CD14-positive monocyte (primary cell): ENCODE measurements at regions of chr16 and their contacts with region 1.

Region 1: DNA sequence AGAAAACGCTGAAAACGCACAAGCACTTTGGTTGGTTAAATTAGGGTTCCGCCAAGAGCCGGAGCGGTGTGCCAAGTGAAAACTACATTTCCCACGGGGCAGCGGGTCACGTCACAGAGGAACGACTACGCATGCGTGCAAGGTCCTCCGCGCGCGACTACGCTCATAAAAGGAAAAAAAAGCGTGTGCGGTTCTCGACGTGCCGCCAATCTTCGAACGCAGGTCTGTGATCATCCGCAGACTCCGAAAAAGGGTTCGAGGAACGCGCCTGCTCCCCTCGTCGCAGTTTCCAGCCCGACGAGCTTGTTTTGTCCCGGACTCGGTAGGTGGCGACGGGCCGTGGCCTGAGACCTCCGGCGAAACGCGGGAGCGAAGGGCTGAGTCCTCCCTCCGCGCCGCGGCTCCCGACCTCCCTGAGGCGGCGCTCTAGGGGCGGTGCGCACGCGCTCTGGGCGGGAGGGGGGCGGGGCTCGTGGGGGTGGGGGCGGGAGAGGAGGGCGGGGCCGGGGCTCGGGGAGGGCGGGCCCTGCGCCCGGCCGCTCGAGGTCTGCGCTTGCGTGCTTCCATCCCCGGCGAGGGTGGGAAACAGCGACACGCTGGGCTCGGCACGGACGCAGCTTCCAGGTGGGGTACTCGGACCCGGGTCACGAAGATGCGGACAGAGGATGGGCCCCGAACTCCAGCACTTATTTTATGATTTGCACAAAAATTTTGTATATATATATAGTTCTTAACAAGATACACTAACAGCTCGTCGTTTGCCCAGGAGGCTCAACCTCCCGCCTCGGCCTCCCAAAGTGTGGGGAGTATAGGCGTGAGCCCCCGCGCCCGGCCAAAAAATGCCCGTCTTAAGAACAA is at the start of gene SGF29:
- DNase-seq: peak; percentile 91 to 92 (median 92)
- H3K4me3 ChIP-seq: peak within 1 kb of the TSS; percentile 56 to 84 (median 71)
- H3K4me3 Mint-ChIP-seq: peak within 1 kb of the TSS; percentile 87 to 90
- H3K27ac ChIP-seq: peak within 1 kb of the TSS; percentile 95 to 99
- H3K27ac Mint-ChIP-seq: peak within 1 kb of the TSS; percentile 95 to 99 (median 98)
- H3K4me1 ChIP-seq: peaks cover 16 to 31% of the 10 kb centered on the region in 2 donors
- H3K4me1 Mint-ChIP-seq: peaks cover 28% of the 10 kb centered on the region
- H3K27me3 ChIP-seq: no peaks in the 10 kb centered on the region
- H3K27me3 Mint-ChIP-seq: peaks cover 0 to 1% (median 1%) of the 10 kb centered on the region in 3 donors
- CTCF ChIP-seq: peak; percentile 12
- polyA plus RNA-seq, gene SGF29: 14.0 to 24.3 (median 18.8) TPM

Region 2: DNA sequence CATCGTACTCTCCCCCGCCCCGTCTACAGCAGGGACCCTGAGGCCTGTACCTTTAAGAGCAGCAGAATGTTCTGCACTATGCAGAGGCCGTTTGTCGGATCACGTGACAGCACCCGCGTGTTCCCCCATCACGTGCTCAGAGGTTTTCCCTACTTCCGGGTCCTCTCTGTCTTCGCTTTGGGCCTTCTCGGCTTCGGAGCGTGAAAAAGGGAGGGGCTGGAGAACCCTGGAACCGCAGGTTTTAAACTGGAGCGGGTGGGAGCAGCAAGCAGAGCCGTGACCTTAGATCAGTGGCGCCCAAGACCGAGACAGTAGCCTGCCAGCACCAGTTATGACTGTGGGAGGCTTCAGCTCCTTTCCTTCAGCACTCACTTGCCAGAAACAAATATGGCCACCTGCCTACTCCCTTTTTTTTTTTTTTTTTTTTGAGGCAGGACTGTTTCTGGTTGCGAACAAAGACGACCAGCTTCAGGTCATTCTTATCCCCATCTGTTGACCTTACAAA is 62.0 kb before region 1 on chr16 and contains the start of gene CLN3:
- intact Hi-C with region 1: loop called (anchors 5 kb)
- DNase-seq: peak; percentile 89 to 93 (median 91)
- H3K4me3 ChIP-seq: peak within 1 kb of the TSS; percentile 73 to 100 (median 99)
- H3K4me3 Mint-ChIP-seq: peak within 1 kb of the TSS; percentile 88 to 95
- H3K27ac ChIP-seq: peak within 1 kb of the TSS; percentile 99
- H3K27ac Mint-ChIP-seq: peak within 1 kb of the TSS; percentile 99 to 100 (median 100)
- H3K4me1 ChIP-seq: peaks cover 53 to 62% of the 10 kb centered on the region in 2 donors
- H3K4me1 Mint-ChIP-seq: peaks cover 58% of the 10 kb centered on the region
- H3K27me3 ChIP-seq: no peaks in the 10 kb centered on the region
- H3K27me3 Mint-ChIP-seq: peaks cover 0 to 1% (median 0%) of the 10 kb centered on the region in 3 donors
- CTCF ChIP-seq: no peak
- polyA plus RNA-seq, gene CLN3: 37.0 to 113 (median 50.2) TPM

Region 3: GRCh38 chr16:28834349-28834748 is 280.3 kb after region 1 on chr16:
- intact Hi-C with region 1: no loop called
- DNase-seq: no peak
- H3K4me3 ChIP-seq: no peak overlapping the region
- H3K4me3 Mint-ChIP-seq: no peak overlapping the region
- H3K27ac ChIP-seq: no peak overlapping the region
- H3K27ac Mint-ChIP-seq: peak overlapping the region in 1 of 7 donors; percentile 18
- H3K4me1 ChIP-seq: peaks cover 3 to 12% of the 10 kb centered on the region in 2 donors
- H3K4me1 Mint-ChIP-seq: peaks cover 11% of the 10 kb centered on the region
- H3K27me3 ChIP-seq: no peaks in the 10 kb centered on the region
- H3K27me3 Mint-ChIP-seq: peaks cover 0 to 1% (median 0%) of the 10 kb centered on the region in 3 donors
- CTCF ChIP-seq: no peak

Region 4: DNA sequence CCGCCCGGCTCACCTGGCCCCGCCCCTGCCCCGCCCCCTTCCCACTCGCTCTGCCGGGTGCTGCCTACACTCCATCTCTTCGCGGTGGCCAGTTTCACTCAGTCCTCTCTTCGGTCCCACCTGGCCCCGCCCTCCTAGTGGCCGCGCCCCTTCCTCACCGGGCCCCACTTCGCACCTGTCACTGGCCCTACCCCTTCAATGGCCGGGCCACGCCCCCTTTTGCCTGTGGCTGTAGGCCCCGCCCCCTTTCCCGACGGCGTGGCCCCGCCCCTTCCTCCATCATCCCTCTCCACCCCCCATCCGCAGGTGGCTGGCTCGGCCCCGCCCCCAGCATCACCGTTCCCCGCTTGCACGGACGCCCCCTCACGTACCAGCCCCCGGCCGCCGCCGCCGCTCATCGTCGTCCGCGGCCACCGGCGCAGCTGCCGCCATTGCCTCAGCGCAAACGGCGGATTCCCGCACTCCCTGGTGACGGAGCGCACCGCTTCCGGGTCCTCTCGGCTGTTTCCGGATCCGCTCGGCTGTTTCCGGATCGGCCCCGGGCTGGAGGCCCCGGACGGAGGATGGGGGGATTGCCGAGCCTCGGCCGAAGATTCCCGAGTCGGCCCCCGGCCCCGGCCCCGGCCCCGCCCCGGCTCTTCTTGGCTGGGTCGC is 370.9 kb after region 1 on chr16 and contains the start of gene RABEP2:
- intact Hi-C with region 1: loop called in 1 of 2 experiments (anchors 10 kb)
- DNase-seq: peak; percentile 81 to 86 (median 84)
- H3K4me3 ChIP-seq: peak within 1 kb of the TSS; percentile 70 to 96 (median 79)
- H3K4me3 Mint-ChIP-seq: peak within 1 kb of the TSS; percentile 94 to 97
- H3K27ac ChIP-seq: peak within 1 kb of the TSS; percentile 90 to 95
- H3K27ac Mint-ChIP-seq: peak within 1 kb of the TSS; percentile 91 to 97 (median 94)
- H3K4me1 ChIP-seq: peaks cover 11 to 17% of the 10 kb centered on the region in 2 donors
- H3K4me1 Mint-ChIP-seq: peaks cover 18% of the 10 kb centered on the region
- H3K27me3 ChIP-seq: no peaks in the 10 kb centered on the region
- H3K27me3 Mint-ChIP-seq: peaks cover 0 to 7% (median 0%) of the 10 kb centered on the region in 3 donors
- CTCF ChIP-seq: no peak
- polyA plus RNA-seq, gene RABEP2: 1.9 to 21.6 (median 2.5) TPM